Panc1 (cell line): ENCODE measurements at regions of chr18 and their contacts with region 1.

Region 1: GRCh38 chr18:24089076-24089475 is 49.8 kb upstream of the CABYR start:
- DNase-seq: no peak
- ATAC-seq: no peak
- H3K4me3 ChIP-seq: no peak overlapping the region
- H3K27ac ChIP-seq: no peak overlapping the region
- H3K4me1 ChIP-seq: no peaks in the 10 kb centered on the region
- H3K27me3 ChIP-seq: no peaks in the 10 kb centered on the region
- CTCF ChIP-seq: no peak

Region 2: GRCh38 chr18:22639026-22639463 is 1450.0 kb before region 1 on chr18:
- CTCF ChIA-PET with region 1: no interaction called
- POLR2A ChIA-PET with region 1: no interaction called
- in situ Hi-C with region 1: no loop called
- intact Hi-C with region 1: no loop called
- DNase-seq: no peak
- ATAC-seq: no peak
- H3K4me3 ChIP-seq: no peak overlapping the region
- H3K27ac ChIP-seq: no peak overlapping the region
- H3K4me1 ChIP-seq: no peaks in the 10 kb centered on the region
- H3K27me3 ChIP-seq: 0 out of 2 replicates have a peak, but pooled peaks cover 3% of the 10 kb centered on the region
- CTCF ChIP-seq: no peak

Region 3: DNA sequence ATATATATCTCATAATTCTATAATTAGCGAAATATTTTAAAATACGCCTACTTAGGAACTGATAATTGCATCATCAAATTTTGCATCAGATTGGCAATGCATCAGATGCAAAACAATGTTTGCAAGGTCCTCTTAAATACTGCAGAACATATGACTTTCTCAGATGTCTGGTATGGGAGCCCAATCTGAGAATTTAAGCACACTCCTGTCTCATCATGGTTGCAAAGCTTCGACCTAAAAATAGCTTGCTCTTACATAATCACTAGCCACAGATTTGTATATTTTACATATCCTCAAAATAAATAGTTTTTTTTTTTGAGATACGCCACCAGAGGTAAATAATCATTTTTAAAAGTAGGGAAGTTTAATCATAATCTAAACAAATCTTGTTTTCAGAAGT is 173.0 kb after region 1 on chr18:
- CTCF ChIA-PET with region 1: no interaction called
- POLR2A ChIA-PET with region 1: no interaction called
- in situ Hi-C with region 1: no loop called
- intact Hi-C with region 1: no loop called
- DNase-seq: no peak
- ATAC-seq: no peak
- H3K4me3 ChIP-seq: no peak overlapping the region
- H3K27ac ChIP-seq: no peak overlapping the region
- H3K4me1 ChIP-seq: peaks cover 3% of the 10 kb centered on the region; the same call in 1 of the 2 replicates
- H3K27me3 ChIP-seq: no peaks in the 10 kb centered on the region
- CTCF ChIP-seq: no peak

Region 4: GRCh38 chr18:26051843-26052242 is 1962.8 kb after region 1 on chr18:
- CTCF ChIA-PET with region 1: interaction called, 12 read pairs
- POLR2A ChIA-PET with region 1: no interaction called
- in situ Hi-C with region 1: no loop called
- intact Hi-C with region 1: no loop called
- DNase-seq: no peak
- ATAC-seq: no peak
- H3K4me3 ChIP-seq: no peak overlapping the region
- H3K27ac ChIP-seq: no peak overlapping the region
- H3K4me1 ChIP-seq: no peaks in the 10 kb centered on the region
- H3K27me3 ChIP-seq: no peaks in the 10 kb centered on the region
- CTCF ChIP-seq: no peak; the same call in 1 of the 2 replicates